Activated CD4-positive, alpha-beta T cell treated with anti-CD3 and anti-CD28 coated beads for 36 hours (primary cell): ENCODE measurements at regions of chr10 and their contacts with region 1.

Region 1: DNA sequence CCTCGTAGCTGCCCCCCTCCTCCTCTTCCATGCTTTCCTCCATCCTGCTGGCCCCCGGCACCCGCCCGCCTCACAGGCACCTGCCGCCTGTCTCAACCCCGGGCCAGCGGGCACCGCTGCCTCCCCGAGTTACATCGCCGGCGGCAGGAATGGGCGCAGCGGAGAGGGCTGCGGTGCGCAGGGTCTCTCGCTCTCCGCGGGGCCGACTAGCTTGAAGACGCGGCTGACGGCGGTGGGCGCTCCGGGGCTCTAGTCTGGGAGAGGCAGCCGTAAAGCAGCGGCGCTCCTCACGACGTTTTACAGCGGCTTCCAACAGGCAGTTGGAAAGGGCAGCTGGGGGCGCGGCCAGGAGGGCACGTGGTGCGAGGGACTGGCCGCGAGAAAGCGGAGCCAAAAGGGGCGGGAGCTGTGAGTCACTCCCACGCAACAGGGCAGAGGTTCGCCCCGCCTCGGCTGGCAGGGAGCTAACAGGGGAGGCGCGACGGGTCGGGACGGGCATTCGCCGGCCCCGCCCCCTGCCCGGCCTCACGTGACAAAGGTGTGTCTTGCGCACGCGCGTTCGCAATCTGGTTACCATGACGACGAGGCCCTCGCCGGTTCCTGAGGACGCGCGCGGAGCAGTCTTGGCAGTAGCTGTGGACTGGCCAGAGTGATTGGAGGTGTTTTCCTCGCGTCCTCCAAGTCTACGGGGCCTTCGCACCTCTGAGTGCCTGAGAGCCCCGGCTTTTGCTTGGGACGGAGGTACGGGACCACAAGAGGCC is at the start of gene CACUL1:
- DNase-seq: peak; percentile 100
- ATAC-seq: peak; percentile 98
- H3K4me3 Mint-ChIP-seq: peak within 1 kb of the TSS; percentile 91
- H3K27ac Mint-ChIP-seq: peak within 1 kb of the TSS; percentile 83
- H3K4me1 Mint-ChIP-seq: peaks cover 33% of the 10 kb centered on the region
- H3K27me3 Mint-ChIP-seq: no peaks in the 10 kb centered on the region
- total RNA-seq, gene CACUL1: 20.1 to 24.4 TPM

Region 2: GRCh38 chr10:117653170-117653515 is 1101.8 kb before region 1 on chr10:
- CTCF ChIA-PET with region 1: no interaction called
- POLR2A ChIA-PET with region 1: no interaction called
- intact Hi-C with region 1: loop called in 1 of 2 experiments (anchors 5 kb)
- DNase-seq: peak; percentile 61
- ATAC-seq: peak; percentile 95
- H3K4me3 Mint-ChIP-seq: no peak overlapping the region
- H3K27ac Mint-ChIP-seq: no peak overlapping the region
- H3K4me1 Mint-ChIP-seq: peaks cover 27% of the 10 kb centered on the region
- H3K27me3 Mint-ChIP-seq: peaks cover 34% of the 10 kb centered on the region

Region 3: DNA sequence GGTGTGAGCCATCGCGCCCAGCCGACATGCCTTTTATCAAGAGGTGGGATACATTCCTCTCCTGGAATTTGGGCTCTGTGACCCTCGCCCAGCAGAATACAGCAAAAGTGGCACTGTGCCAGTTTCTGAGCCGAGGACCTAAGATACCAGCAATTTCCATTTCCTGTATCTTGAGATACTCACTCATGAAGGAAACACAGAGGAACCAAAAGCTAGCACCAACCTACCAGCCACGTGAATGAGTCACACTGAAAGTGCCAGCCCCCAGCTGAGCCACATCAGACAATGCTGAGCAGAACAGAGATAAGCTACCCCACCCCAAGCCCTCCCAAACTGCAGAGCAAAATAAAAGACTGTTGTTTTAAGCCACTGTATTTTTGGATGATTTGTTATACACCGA is 56.5 kb before region 1 on chr10:
- CTCF ChIA-PET with region 1: interaction called, 5 read pairs
- POLR2A ChIA-PET with region 1: no interaction called
- intact Hi-C with region 1: loop called (anchors 1 to 2 kb)
- DNase-seq: peak; percentile 89
- ATAC-seq: peak; percentile 100
- H3K4me3 Mint-ChIP-seq: peak overlapping the region; percentile 16
- H3K27ac Mint-ChIP-seq: peak overlapping the region; percentile 18
- H3K4me1 Mint-ChIP-seq: peaks cover 58% of the 10 kb centered on the region
- H3K27me3 Mint-ChIP-seq: peaks cover 2% of the 10 kb centered on the region

Region 4: DNA sequence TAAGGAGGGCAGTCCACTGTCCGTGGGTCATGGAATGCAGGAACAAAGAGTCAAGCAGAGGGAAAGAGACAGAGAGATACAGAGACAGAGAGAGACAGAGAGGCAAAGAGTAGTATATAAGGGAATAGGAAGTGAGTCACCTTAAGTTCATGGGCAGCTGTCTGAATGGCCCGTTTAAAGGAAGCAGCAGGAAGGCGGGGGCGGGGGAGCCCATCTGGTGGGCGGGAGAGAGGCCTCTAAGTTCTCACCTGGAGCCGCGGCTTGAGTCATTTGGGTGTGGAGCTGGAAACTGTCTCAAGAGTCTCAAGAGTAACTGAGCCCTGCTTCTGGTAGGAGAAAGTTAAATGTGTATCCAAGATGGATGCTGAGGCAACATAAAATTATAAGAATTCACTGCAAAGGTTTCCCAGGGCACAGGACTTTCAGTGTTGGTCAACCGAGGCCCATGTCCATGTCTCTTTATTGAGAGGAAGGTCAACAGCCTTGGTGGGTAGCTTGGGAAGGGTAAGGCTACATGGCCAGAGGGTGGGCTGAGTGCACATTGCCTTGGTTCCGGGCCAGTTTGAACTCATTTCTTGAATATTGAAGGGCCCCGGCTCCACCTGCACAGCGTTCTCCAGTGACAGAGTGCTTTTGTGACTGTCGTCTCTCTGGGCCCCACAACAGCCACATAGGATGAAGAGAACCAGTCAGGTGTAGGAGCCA is 85.3 kb after region 1 on chr10:
- CTCF ChIA-PET with region 1: no interaction called
- POLR2A ChIA-PET with region 1: no interaction called
- intact Hi-C with region 1: loop called in 1 of 2 experiments (anchors 1 kb)
- DNase-seq: peak; percentile 93
- ATAC-seq: peak; percentile 97
- H3K4me3 Mint-ChIP-seq: peak overlapping the region; percentile 5
- H3K27ac Mint-ChIP-seq: peak overlapping the region; percentile 86
- H3K4me1 Mint-ChIP-seq: peaks cover 19% of the 10 kb centered on the region
- H3K27me3 Mint-ChIP-seq: no peaks in the 10 kb centered on the region

Region 5: GRCh38 chr10:119073584-119073983 is 318.7 kb after region 1 on chr10:
- CTCF ChIA-PET with region 1: no interaction called
- POLR2A ChIA-PET with region 1: no interaction called
- intact Hi-C with region 1: no loop called
- DNase-seq: no peak
- ATAC-seq: no peak
- H3K4me3 Mint-ChIP-seq: no peak overlapping the region
- H3K27ac Mint-ChIP-seq: no peak overlapping the region
- H3K4me1 Mint-ChIP-seq: peaks cover 44% of the 10 kb centered on the region
- H3K27me3 Mint-ChIP-seq: no peaks in the 10 kb centered on the region

Region 6: GRCh38 chr10:119103903-119104652 is 349.2 kb after region 1 on chr10 and contains the start of gene DENND10:
- CTCF ChIA-PET with region 1: no interaction called
- POLR2A ChIA-PET with region 1: no interaction called
- intact Hi-C with region 1: loop called in 1 of 2 experiments (anchors 1 kb)
- DNase-seq: peak; percentile 90
- ATAC-seq: peak; percentile 92
- H3K4me3 Mint-ChIP-seq: peak within 1 kb of the TSS; percentile 70
- H3K27ac Mint-ChIP-seq: no peak within 1 kb of the TSS
- H3K4me1 Mint-ChIP-seq: peaks cover 10% of the 10 kb centered on the region
- H3K27me3 Mint-ChIP-seq: no peaks in the 10 kb centered on the region
- total RNA-seq, gene DENND10: 20.5 to 21.9 TPM

Region 7: GRCh38 chr10:119333146-119333792 is 578.4 kb after region 1 on chr10:
- CTCF ChIA-PET with region 1: no interaction called
- POLR2A ChIA-PET with region 1: no interaction called
- intact Hi-C with region 1: no loop called
- DNase-seq: peak; percentile 75
- ATAC-seq: peak; percentile 99
- H3K4me3 Mint-ChIP-seq: no peak overlapping the region
- H3K27ac Mint-ChIP-seq: no peak overlapping the region
- H3K4me1 Mint-ChIP-seq: peaks cover 11% of the 10 kb centered on the region
- H3K27me3 Mint-ChIP-seq: no peaks in the 10 kb centered on the region

Region 8: GRCh38 chr10:119596537-119597404 is 841.9 kb after region 1 on chr10 and contains the start of gene TIAL1:
- CTCF ChIA-PET with region 1: no interaction called
- POLR2A ChIA-PET with region 1: no interaction called
- intact Hi-C with region 1: loop called in 1 of 2 experiments (anchors 1 kb)
- DNase-seq: peak; percentile 96
- ATAC-seq: peak; percentile 90
- H3K4me3 Mint-ChIP-seq: peak within 1 kb of the TSS; percentile 92
- H3K27ac Mint-ChIP-seq: peak within 1 kb of the TSS; percentile 93
- H3K4me1 Mint-ChIP-seq: peaks cover 49% of the 10 kb centered on the region
- H3K27me3 Mint-ChIP-seq: no peaks in the 10 kb centered on the region
- total RNA-seq, gene TIAL1: 187 to 197 TPM

Region 9: DNA sequence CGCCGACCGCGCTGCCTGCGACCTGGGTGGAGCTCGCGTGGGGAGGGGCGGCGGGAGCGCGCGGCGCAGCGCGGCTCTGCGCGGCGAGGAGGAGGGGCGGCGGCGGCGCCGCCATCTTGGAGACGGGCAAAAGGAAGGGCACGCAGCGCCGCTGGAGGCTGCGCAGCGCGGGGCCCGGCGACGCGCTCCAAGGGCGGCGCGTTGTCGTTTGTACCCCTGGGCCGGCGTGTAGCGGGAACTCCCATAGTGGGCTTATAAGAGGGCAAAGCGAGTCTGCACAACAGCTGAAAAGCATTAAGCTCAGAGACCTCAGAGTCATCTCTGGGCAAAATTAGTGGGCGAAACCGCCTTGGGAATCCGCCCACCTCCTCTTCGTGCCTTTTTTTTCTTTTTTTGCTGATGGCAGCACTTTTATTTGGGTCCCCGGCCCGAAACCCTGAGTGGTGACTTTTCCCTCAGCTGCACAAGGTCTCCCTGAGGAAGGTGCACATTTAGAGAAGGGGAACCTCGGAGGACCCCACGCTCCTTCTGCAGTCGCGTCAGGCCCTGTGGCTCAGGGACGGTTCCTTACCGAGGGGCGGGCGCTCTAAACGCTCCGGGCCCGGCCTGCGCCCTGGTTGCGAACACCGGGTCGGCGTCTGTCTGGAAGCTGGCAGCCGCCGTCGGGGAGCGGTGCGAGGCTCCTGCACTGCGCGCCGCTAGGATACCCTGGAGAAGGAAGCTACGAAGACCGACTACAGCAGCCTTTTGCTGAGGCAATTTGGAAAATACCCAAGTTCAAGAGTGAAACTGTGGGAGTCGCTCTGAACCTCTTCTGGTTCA is 1118.2 kb after region 1 on chr10:
- CTCF ChIA-PET with region 1: no interaction called
- POLR2A ChIA-PET with region 1: no interaction called
- intact Hi-C with region 1: loop called in 1 of 2 experiments (anchors 2 kb)
- DNase-seq: peak; percentile 94
- ATAC-seq: peak; percentile 95
- H3K4me3 Mint-ChIP-seq: peak overlapping the region; percentile 79
- H3K27ac Mint-ChIP-seq: peak overlapping the region; percentile 87
- H3K4me1 Mint-ChIP-seq: peaks cover 33% of the 10 kb centered on the region
- H3K27me3 Mint-ChIP-seq: no peaks in the 10 kb centered on the region